OCI-LY7 (cell line): ENCODE measurements at regions of chr22 and their contacts with region 1.

Region 1: DNA sequence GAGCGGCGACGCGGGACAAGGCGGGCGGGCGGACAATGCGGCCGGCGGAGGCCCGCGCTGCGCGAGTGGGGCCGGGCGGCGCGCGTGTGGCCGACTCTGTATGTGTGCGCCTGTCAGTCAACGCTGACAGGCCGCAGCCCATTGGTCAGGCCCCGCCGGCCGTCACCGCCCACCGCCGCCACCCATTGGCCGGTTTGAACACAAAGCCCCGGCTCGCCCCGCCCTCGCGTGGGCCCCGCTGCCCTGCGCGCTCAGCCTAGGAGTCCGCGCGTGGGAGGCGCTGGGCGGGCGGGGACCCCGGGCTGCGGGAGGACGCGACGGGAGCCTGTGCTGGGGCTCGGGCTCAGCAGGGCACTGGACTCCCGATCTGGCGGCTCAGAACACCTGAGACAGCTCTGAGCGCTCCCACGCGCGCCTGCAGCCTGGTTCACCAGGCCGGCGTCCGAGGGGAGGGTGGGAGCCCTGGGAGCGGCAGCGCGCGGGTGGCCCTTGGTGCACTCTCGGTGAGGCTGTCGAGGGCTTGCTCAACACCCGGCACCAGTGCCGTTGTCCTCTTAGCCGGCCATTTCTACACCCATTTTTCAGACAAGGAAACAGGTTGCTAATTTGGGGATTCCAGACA is at the start of gene SUN2:
- DNase-seq: peak; percentile 88
- H3K4me3 ChIP-seq: peak within 1 kb of the TSS; percentile 94
- H3K27ac ChIP-seq: peak within 1 kb of the TSS; percentile 79
- H3K4me1 ChIP-seq: peaks cover 52% of the 10 kb centered on the region
- CTCF ChIP-seq: no peak
- total RNA-seq, gene SUN2: 59.1 and 67.6 TPM in 2 replicates

Region 2: GRCh38 chr22:38705235-38706100 is 50.6 kb before region 1 on chr22 and contains the start of gene GTPBP1:
- CTCF ChIA-PET with region 1: no interaction called
- POLR2A ChIA-PET with region 1: interaction called, 4 read pairs
- intact Hi-C with region 1: loop called (anchors 2 kb)
- DNase-seq: peak; percentile 100
- H3K4me3 ChIP-seq: peak within 1 kb of the TSS; percentile 97
- H3K27ac ChIP-seq: peak within 1 kb of the TSS; percentile 79
- H3K4me1 ChIP-seq: peaks cover 69% of the 10 kb centered on the region
- CTCF ChIP-seq: no peak
- total RNA-seq, gene GTPBP1: 46.1 and 51.1 TPM in 2 replicates